ENCODE measurements at regions of chr9 and their contacts with region 1.

Region 1: GRCh38 chr9:35664531-35665470 is at the start of gene ARHGEF39:
- DNase-seq: peak; percentile 59
- ATAC-seq: peak; percentile 89
- H3K4me3 ChIP-seq: peak within 1 kb of the TSS; percentile 91 to 93
- H3K27ac ChIP-seq: peak within 1 kb of the TSS; percentile 88
- H3K4me1 ChIP-seq: peaks cover 25 to 60% of the 10 kb centered on the region in 2 experiments; a peak in 3 of 4 replicates
- H3K27me3 ChIP-seq: no peaks in the 10 kb centered on the region
- CTCF ChIP-seq: peak in 1 of 3 experiments; percentile 30; a peak in 1 of 6 replicates
- POLR2A ChIP-seq: peak; percentile 87
- RAD21 ChIP-seq: no peak
- total RNA-seq, gene ARHGEF39: 29.8 TPM

Region 2: GRCh38 chr9:35696525-35697215 is 31.9 kb after region 1 on chr9:
- CTCF ChIA-PET with region 1: interaction called, 33 read pairs
- POLR2A ChIA-PET with region 1: interaction called, 4 read pairs
- RAD21 ChIA-PET with region 1: interaction called in 1 of 2 experiments, 3 read pairs
- intact Hi-C with region 1: no loop called
- DNase-seq: peak; percentile 37
- ATAC-seq: peak; percentile 94
- H3K4me3 ChIP-seq: no peak overlapping the region
- H3K27ac ChIP-seq: peak overlapping the region; percentile 2; the same call in 1 of the 2 replicates
- H3K4me1 ChIP-seq: peaks cover under 1 to 4% of the 10 kb centered on the region in 2 experiments; a peak in 2 of 4 replicates
- H3K27me3 ChIP-seq: no peaks in the 10 kb centered on the region
- CTCF ChIP-seq: peak in 2 of 3 experiments; percentile 96 to 97; a peak in 4 of 6 replicates
- POLR2A ChIP-seq: no peak
- RAD21 ChIP-seq: no peak